ENCODE measurements at regions of chr3 and their contacts with region 1.

Region 1: GRCh38 chr3:38131621-38132369 is 5.1 kb downstream of the ACAA1 start:
- DNase-seq: peak; percentile 60
- H3K4me3 Mint-ChIP-seq: no peak overlapping the region
- H3K27ac Mint-ChIP-seq: no peak overlapping the region
- H3K4me1 Mint-ChIP-seq: peaks cover 30% of the 10 kb centered on the region
- H3K27me3 Mint-ChIP-seq: no peaks in the 10 kb centered on the region
- CTCF ChIP-seq: peak; percentile 51

Region 2: GRCh38 chr3:38297947-38298711 is 166.3 kb after region 1 on chr3:
- CTCF ChIA-PET with region 1: no interaction called
- POLR2A ChIA-PET with region 1: no interaction called
- intact Hi-C with region 1: loop called (anchors 1 kb)
- DNase-seq: peak; percentile 23
- H3K4me3 Mint-ChIP-seq: no peak overlapping the region
- H3K27ac Mint-ChIP-seq: no peak overlapping the region
- H3K4me1 Mint-ChIP-seq: no peaks in the 10 kb centered on the region
- H3K27me3 Mint-ChIP-seq: no peaks in the 10 kb centered on the region
- CTCF ChIP-seq: peak; percentile 40

Measured in MCF 10A (cell line).